A549 (cell line): ENCODE measurements at regions of chr1 and their contacts with region 1.

Region 1: DNA sequence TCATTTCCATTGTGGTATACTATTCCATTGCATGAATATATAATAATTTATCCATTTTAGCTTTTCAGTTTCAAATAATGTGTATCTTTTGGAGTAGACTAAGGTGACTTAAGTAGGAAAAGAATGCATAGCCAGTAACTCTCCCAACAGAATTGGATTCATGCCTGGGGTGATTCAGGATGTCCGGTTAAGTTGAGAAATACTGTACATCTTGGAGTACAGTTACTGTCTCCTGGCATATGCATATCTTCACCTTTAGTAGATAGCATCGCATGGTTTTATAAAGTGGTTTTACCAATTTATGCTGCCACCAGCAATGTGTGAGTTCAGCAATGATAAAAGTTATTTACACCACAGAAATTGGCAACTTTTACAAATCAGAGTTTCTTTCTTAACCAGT is 18.6 kb upstream of the SLC6A9 start:
- DNase-seq: peak in 1 of 2 experiments; percentile 50
- ATAC-seq: peak; percentile 49 to 65; a peak in 5 of 6 replicates
- H3K4me3 ChIP-seq: peak overlapping the region; percentile 34; the same call in 1 of the 3 replicates
- H3K27ac ChIP-seq: peak overlapping the region; percentile 86 to 91
- H3K4me1 ChIP-seq: peaks cover 33% of the 10 kb centered on the region
- CTCF ChIP-seq: no peak
- EP300 ChIP-seq: no peak
- POLR2A ChIP-seq: no peak
- RAD21 ChIP-seq: no peak

Region 2: GRCh38 chr1:43602990-43603389 is 446.8 kb before region 1 on chr1:
- CTCF ChIA-PET with region 1: no interaction called
- POLR2A ChIA-PET with region 1: no interaction called
- DNase-seq: no peak
- ATAC-seq: no peak
- H3K4me3 ChIP-seq: no peak overlapping the region
- H3K27ac ChIP-seq: no peak overlapping the region
- H3K4me1 ChIP-seq: no peaks in the 10 kb centered on the region
- CTCF ChIP-seq: no peak
- EP300 ChIP-seq: no peak
- POLR2A ChIP-seq: no peak
- RAD21 ChIP-seq: no peak

Region 3: DNA sequence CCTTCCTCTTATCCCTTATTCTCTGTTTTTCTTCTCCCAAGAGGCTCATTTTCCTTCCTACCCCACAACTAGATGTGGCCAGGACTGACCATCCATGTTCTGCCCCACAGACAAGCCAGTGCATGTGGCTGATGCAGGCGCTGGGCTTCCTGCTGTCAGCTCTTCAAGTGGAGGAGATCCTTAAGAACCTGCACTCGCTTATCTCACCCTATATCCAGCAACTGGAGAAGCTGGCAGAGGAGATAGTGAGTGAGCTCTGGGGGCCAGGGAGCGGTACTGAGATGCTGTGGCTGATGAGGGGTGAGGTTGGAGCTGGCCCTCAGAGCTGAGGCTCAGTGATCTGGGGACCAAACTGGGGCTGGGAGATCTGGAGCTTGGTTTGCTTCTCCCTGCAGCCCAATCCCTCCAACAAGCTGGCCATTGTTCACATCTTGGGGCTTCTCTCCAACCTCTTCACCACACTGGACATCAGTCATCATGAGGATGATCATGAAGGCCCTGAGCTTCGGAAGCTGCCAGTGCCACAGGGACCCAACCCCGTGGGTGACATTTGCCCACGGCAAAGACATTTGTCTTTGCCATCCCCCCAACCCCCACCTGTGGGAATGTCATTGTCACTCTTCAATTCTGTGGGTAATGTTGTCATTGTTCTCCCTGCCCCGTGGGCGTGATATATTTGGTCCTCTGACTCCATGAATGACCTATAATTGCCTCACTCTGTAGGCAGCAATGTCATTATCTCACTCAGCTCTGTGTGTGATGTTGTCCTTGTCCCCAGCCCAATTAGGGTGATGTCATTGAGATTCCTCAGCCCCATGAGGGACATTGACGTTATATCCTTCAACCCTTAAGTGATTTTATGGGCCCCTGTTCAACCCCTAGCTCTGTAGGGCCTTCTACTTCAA is 91.2 kb before region 1 on chr1:
- CTCF ChIA-PET with region 1: no interaction called
- POLR2A ChIA-PET with region 1: no interaction called
- DNase-seq: no peak
- ATAC-seq: no peak
- H3K4me3 ChIP-seq: no peak overlapping the region
- H3K27ac ChIP-seq: no peak overlapping the region
- H3K4me1 ChIP-seq: no peaks in the 10 kb centered on the region
- CTCF ChIP-seq: no peak
- EP300 ChIP-seq: no peak
- POLR2A ChIP-seq: no peak
- RAD21 ChIP-seq: no peak

Region 4: DNA sequence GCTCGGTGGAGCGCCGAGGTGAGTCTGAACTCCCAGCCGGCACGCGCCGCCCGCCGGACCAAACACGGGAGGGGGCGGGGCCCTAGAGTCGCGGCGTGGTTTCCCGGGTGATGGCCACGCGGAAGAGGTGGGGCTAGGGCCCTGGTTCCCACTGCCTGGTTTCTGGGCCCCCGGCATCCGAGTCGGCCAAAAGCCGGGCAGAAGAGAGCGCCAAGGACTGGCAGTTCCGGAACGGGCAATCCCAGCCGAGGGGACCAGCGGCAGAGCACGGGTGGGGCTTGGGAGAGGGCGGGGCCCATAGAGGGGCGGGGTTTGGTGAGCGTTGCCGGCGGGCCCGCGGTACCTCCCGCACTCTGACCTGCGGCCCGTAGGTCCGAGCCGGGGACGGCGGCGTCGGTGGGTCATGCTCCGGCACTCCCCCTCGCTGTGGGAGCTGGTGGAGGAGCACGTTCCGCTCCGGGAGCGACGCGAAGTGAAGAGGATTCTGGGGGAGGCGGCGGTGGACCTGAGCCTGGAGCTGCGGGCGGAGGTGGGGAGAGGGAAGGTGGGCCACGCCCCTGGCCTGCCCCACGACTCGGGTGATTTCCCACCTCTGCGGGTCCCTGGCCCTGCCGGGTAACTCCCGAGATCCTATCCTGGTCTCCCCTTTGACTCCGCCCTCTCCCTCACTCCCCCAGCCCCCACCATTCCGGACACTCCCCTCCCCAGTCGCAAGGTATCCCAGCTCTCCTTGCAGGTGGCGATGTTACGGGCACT is 58.2 kb before region 1 on chr1 and contains the start of gene CCDC24:
- CTCF ChIA-PET with region 1: interaction called, 18 read pairs
- POLR2A ChIA-PET with region 1: no interaction called
- DNase-seq: peak; percentile 65 to 83
- ATAC-seq: peak; percentile 73 to 87
- H3K4me3 ChIP-seq: peak within 1 kb of the TSS; percentile 84
- H3K27ac ChIP-seq: peak within 1 kb of the TSS; percentile 87 to 89
- H3K4me1 ChIP-seq: peaks cover 27% of the 10 kb centered on the region
- CTCF ChIP-seq: no peak
- EP300 ChIP-seq: no peak
- POLR2A ChIP-seq: peak; percentile 43
- RAD21 ChIP-seq: no peak
- polyA plus RNA-seq, gene CCDC24: 2.0 and 2.9 TPM in 2 replicates

Region 5: DNA sequence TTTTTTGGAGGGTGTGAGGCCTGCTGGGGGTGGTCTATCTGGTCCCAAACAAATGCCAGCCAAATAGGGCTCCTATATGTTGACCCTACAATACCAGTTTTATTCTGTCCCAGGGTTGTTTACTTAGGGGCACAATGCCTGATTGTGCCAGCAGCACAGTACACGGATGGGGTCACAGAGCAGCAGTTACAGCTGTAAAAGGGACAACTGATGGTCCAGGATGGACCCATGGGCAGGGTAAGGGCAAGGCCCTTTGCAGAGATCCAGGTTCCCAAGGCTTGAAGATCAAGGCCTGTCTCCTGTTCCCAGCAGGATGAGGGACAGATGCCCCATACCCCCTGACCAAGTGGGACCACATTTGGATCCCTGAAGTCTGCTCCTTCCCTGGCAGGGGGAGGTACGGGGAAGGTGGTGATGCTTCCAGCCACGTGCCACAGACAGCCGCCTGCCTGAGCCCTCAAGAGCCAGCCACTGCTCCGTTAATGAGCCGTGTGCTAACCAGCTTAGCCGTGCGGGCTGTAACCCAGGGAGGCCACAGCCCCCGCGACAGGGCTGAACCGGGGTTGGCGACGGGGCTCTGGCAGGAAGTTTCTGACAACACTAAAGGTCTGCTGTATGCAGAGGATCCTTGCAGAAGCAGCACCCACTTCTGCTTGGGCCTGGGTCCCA is 36.8 kb before region 1 on chr1:
- CTCF ChIA-PET with region 1: interaction called, 148 read pairs
- POLR2A ChIA-PET with region 1: no interaction called
- DNase-seq: no peak
- ATAC-seq: no peak
- H3K4me3 ChIP-seq: no peak overlapping the region
- H3K27ac ChIP-seq: no peak overlapping the region
- H3K4me1 ChIP-seq: 0 out of 3 replicates have a peak, but pooled peaks cover 3% of the 10 kb centered on the region
- CTCF ChIP-seq: no peak
- EP300 ChIP-seq: no peak
- POLR2A ChIP-seq: no peak
- RAD21 ChIP-seq: no peak

Region 6: GRCh38 chr1:44029906-44030604 is 19.8 kb before region 1 on chr1:
- CTCF ChIA-PET with region 1: interaction called, 68 read pairs
- POLR2A ChIA-PET with region 1: interaction called, 4 read pairs
- DNase-seq: peak; percentile 76 to 88
- ATAC-seq: peak; percentile 78 to 80
- H3K4me3 ChIP-seq: peak overlapping the region; percentile 82
- H3K27ac ChIP-seq: peak overlapping the region; percentile 96 to 99
- H3K4me1 ChIP-seq: peaks cover 46% of the 10 kb centered on the region
- CTCF ChIP-seq: no peak
- EP300 ChIP-seq: no peak
- POLR2A ChIP-seq: peak; percentile 57
- RAD21 ChIP-seq: no peak